Activated CD4-positive, alpha-beta T cell treated with anti-CD3 and anti-CD28 coated beads for 36 hours (primary cell): ENCODE measurements at regions of chr5 and their contacts with region 1.

Region 1: GRCh38 chr5:107289030-107289714 is 381.6 kb downstream of the EFNA5 start:
- DNase-seq: peak; percentile 11
- ATAC-seq: peak; percentile 95
- H3K4me3 Mint-ChIP-seq: no peak overlapping the region
- H3K27ac Mint-ChIP-seq: no peak overlapping the region
- H3K4me1 Mint-ChIP-seq: peaks cover 11% of the 10 kb centered on the region
- H3K27me3 Mint-ChIP-seq: peaks cover 22% of the 10 kb centered on the region

Region 2: GRCh38 chr5:106966686-106967315 is 322.4 kb before region 1 on chr5:
- CTCF ChIA-PET with region 1: no interaction called
- POLR2A ChIA-PET with region 1: no interaction called
- intact Hi-C with region 1: no loop called
- DNase-seq: no peak
- ATAC-seq: no peak
- H3K4me3 Mint-ChIP-seq: no peak overlapping the region
- H3K27ac Mint-ChIP-seq: no peak overlapping the region
- H3K4me1 Mint-ChIP-seq: no peaks in the 10 kb centered on the region
- H3K27me3 Mint-ChIP-seq: no peaks in the 10 kb centered on the region

Region 3: GRCh38 chr5:107085572-107085971 is 203.6 kb before region 1 on chr5:
- CTCF ChIA-PET with region 1: no interaction called
- POLR2A ChIA-PET with region 1: no interaction called
- intact Hi-C with region 1: no loop called
- DNase-seq: no peak
- ATAC-seq: no peak
- H3K4me3 Mint-ChIP-seq: no peak overlapping the region
- H3K27ac Mint-ChIP-seq: no peak overlapping the region
- H3K4me1 Mint-ChIP-seq: no peaks in the 10 kb centered on the region
- H3K27me3 Mint-ChIP-seq: no peaks in the 10 kb centered on the region

Region 4: GRCh38 chr5:107263387-107264018 is 25.7 kb before region 1 on chr5:
- CTCF ChIA-PET with region 1: no interaction called
- POLR2A ChIA-PET with region 1: no interaction called
- intact Hi-C with region 1: loop called in 1 of 2 experiments (anchors 2 kb)
- DNase-seq: no peak
- ATAC-seq: peak; percentile 58
- H3K4me3 Mint-ChIP-seq: no peak overlapping the region
- H3K27ac Mint-ChIP-seq: peak overlapping the region; percentile 20
- H3K4me1 Mint-ChIP-seq: peaks cover 7% of the 10 kb centered on the region
- H3K27me3 Mint-ChIP-seq: peaks cover 10% of the 10 kb centered on the region

Region 5: GRCh38 chr5:107274576-107274975 is 14.6 kb before region 1 on chr5:
- CTCF ChIA-PET with region 1: no interaction called
- POLR2A ChIA-PET with region 1: no interaction called
- intact Hi-C with region 1: no loop called
- DNase-seq: no peak
- ATAC-seq: no peak
- H3K4me3 Mint-ChIP-seq: no peak overlapping the region
- H3K27ac Mint-ChIP-seq: no peak overlapping the region
- H3K4me1 Mint-ChIP-seq: no peaks in the 10 kb centered on the region
- H3K27me3 Mint-ChIP-seq: peaks cover 8% of the 10 kb centered on the region

Region 6: DNA sequence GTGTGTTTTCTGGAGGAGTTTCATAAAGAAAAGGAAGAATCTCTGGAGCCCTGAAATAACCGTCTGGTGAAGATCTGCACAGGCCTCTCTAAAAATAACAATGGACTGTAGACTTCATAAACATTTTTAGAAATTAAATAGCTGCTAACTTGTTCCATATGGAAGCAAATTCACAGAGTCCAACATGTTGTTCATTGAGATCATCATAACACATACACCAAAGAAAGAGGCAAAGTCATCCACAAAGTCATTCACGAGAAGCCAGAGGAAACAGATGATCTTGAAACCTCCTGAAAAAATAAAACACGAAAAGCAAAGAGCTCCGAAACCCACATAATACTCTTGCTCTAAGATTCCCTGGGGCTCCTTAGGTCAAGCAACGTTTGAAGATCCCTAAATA is 33.8 kb after region 1 on chr5:
- CTCF ChIA-PET with region 1: no interaction called
- POLR2A ChIA-PET with region 1: no interaction called
- intact Hi-C with region 1: no loop called
- DNase-seq: no peak
- ATAC-seq: no peak
- H3K4me3 Mint-ChIP-seq: no peak overlapping the region
- H3K27ac Mint-ChIP-seq: no peak overlapping the region
- H3K4me1 Mint-ChIP-seq: no peaks in the 10 kb centered on the region
- H3K27me3 Mint-ChIP-seq: peaks cover 4% of the 10 kb centered on the region

Region 7: DNA sequence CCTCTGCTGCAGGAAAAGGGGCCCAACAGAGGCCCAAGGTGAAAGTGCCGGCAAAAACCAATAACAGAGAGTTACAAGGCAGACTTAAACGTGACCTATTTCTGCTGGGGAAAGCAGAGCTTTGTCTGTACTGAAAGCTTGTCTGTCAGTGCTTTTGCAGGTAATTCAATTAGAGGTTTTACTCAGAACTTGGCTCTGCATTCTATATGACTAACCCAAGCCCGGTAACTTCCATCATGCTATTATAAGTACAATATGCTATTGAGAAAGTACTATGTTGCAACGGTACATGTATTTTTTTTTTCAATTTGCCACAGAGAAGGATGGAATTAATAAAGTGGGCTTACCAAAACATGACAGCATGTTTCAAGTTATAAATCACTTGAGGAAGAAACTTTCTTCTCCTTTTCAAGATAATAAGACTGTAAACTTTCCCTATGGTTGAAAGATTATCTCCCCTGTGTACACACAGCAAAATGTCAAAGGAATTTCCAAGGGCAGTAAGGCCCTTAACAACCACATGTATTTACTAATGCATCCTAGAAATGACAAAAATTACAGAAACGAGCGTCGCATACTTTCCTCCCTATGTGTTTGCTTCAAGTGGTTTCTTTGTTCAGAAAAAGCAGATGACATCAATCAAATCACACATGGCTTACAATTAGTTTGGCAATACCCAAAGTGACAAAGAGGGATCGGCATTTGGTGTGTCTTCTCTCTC is 99.1 kb after region 1 on chr5:
- CTCF ChIA-PET with region 1: no interaction called
- POLR2A ChIA-PET with region 1: no interaction called
- intact Hi-C with region 1: loop called in 1 of 2 experiments (anchors 1 kb)
- DNase-seq: peak; percentile 6
- ATAC-seq: peak; percentile 82
- H3K4me3 Mint-ChIP-seq: no peak overlapping the region
- H3K27ac Mint-ChIP-seq: no peak overlapping the region
- H3K4me1 Mint-ChIP-seq: peaks cover 25% of the 10 kb centered on the region
- H3K27me3 Mint-ChIP-seq: no peaks in the 10 kb centered on the region

Region 8: GRCh38 chr5:107486489-107486888 is 197.3 kb after region 1 on chr5:
- CTCF ChIA-PET with region 1: no interaction called
- POLR2A ChIA-PET with region 1: no interaction called
- intact Hi-C with region 1: loop called in 1 of 2 experiments (anchors 5 kb)
- DNase-seq: peak; percentile 79
- ATAC-seq: peak; percentile 99
- H3K4me3 Mint-ChIP-seq: no peak overlapping the region
- H3K27ac Mint-ChIP-seq: no peak overlapping the region
- H3K4me1 Mint-ChIP-seq: peaks cover 22% of the 10 kb centered on the region
- H3K27me3 Mint-ChIP-seq: peaks cover 19% of the 10 kb centered on the region